ENCODE measurements at regions of chr4 and their contacts with region 1.

Region 1: DNA sequence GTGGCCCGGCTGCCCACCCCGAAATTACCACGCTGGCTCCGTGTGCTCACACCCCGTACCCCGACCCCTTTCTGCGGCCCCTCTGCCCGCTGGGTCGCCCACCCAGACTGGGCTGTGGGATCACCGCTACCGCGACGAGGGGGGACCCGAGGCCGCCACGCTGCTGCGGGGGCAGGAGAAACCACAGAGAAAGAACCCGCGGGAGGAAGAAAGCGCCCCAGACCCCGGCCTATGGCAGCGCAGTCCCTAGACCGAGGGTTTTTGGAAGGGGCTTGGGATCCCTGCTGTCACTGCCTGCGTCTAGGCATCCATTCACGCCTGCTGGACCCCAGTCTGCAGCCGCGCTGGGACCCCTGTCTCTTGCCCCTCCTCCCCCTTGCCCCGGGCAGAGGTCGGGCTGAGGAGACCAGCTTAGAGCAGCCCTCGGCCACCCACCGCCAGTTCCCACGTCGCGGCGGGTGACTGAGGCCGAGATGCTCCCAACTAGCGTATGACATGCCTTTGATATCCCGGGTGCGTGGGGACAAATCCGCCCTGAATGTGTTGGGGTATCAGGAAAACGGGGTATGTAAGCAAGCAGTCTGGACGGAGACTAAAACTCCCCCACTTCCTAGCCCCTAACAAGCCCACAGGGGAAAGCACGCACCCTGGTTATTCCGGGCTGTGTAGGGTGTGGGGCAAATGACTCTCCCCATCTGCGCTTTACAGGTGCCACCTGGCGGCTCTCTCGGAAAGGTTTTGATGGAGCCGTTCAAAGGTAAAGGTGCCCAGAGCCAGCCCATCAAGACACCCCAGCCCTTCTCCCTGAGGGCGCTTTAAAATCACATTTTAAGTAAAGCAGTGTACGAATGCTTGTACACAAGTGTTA is 862 bp upstream of the INPP4B start:
- DNase-seq: no peak
- H3K4me3 ChIP-seq: peak overlapping the region; percentile 67 to 80 (median 75)
- H3K27ac ChIP-seq: peak overlapping the region; percentile 72 to 82 (median 78)
- H3K4me1 ChIP-seq: peaks cover 0 to 29% (median 9%) of the 10 kb centered on the region in 4 donors
- H3K27me3 ChIP-seq: peaks cover 0 to 11% (median 0%) of the 10 kb centered on the region in 3 donors
- CTCF ChIP-seq: no peak
- EP300 ChIP-seq: no peak
- POLR2A ChIP-seq: no peak

Region 2: GRCh38 chr4:142353149-142353738 is 493.7 kb before region 1 on chr4:
- intact Hi-C with region 1: loop called (anchors 2 kb)
- DNase-seq: no peak
- H3K4me3 ChIP-seq: no peak overlapping the region
- H3K27ac ChIP-seq: peak overlapping the region in 2 of 4 donors; percentile 3 to 27
- H3K4me1 ChIP-seq: peaks cover 0 to 33% (median 18%) of the 10 kb centered on the region in 4 donors
- H3K27me3 ChIP-seq: no peaks in the 10 kb centered on the region
- CTCF ChIP-seq: peak; percentile 8 to 90 (median 65)
- EP300 ChIP-seq: no peak
- POLR2A ChIP-seq: no peak

Measured in sigmoid colon (tissue), 7 donors.